WTC11 (cell line): ENCODE measurements at regions of chr11 and their contacts with region 1.

Region 1: GRCh38 chr11:125070699-125071254 is 7.7 kb downstream of the SLC37A2 start:
- DNase-seq: no peak
- ATAC-seq: no peak
- H3K4me3 Mint-ChIP-seq: no peak overlapping the region
- H3K27ac Mint-ChIP-seq: no peak overlapping the region
- H3K4me1 Mint-ChIP-seq: peaks cover 16% of the 10 kb centered on the region
- H3K27me3 Mint-ChIP-seq: peaks cover 7% of the 10 kb centered on the region
- CTCF ChIP-seq: no peak

Region 2: GRCh38 chr11:125082611-125083311 is 12.0 kb after region 1 on chr11:
- CTCF ChIA-PET with region 1: interaction called, 10 read pairs
- POLR2A ChIA-PET with region 1: no interaction called
- DNase-seq: no peak
- ATAC-seq: no peak
- H3K4me3 Mint-ChIP-seq: no peak overlapping the region
- H3K27ac Mint-ChIP-seq: no peak overlapping the region
- H3K4me1 Mint-ChIP-seq: no peaks in the 10 kb centered on the region
- H3K27me3 Mint-ChIP-seq: no peaks in the 10 kb centered on the region
- CTCF ChIP-seq: no peak